Activated CD4-positive, alpha-beta T cell treated with anti-CD3 and anti-CD28 coated beads for 36 hours (primary cell): ENCODE measurements at regions of chr20 and their contacts with region 1.

Region 1: GRCh38 chr20:25525295-25526266 is 59.8 kb downstream of the NINL start:
- DNase-seq: no peak
- ATAC-seq: no peak
- H3K4me3 Mint-ChIP-seq: no peak overlapping the region
- H3K27ac Mint-ChIP-seq: no peak overlapping the region
- H3K4me1 Mint-ChIP-seq: no peaks in the 10 kb centered on the region
- H3K27me3 Mint-ChIP-seq: no peaks in the 10 kb centered on the region

Region 2: DNA sequence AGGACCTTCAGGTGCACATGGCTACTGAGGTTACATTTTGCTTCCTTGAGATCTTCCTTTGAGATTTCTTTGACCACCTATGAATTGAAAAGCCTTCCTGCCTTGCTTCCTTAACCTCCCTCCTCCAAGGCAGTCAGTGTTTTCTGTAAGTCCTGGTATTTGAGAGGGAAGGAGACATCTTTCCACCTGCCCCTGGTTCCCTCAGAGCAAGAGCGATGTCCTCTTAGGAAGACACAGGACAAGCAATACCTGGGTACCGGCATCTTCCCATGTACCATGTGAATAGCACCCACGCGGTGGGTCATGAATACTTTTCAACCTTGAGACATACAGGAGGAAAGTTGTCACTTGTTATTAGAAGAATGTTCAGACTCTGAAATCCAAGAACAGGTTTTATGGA is 81.0 kb before region 1 on chr20:
- CTCF ChIA-PET with region 1: no interaction called
- POLR2A ChIA-PET with region 1: no interaction called
- intact Hi-C with region 1: loop called in 1 of 2 experiments (anchors 10 kb)
- DNase-seq: no peak
- ATAC-seq: no peak
- H3K4me3 Mint-ChIP-seq: no peak overlapping the region
- H3K27ac Mint-ChIP-seq: no peak overlapping the region
- H3K4me1 Mint-ChIP-seq: no peaks in the 10 kb centered on the region
- H3K27me3 Mint-ChIP-seq: no peaks in the 10 kb centered on the region

Region 3: GRCh38 chr20:25470045-25470444 is 55.5 kb before region 1 on chr20:
- CTCF ChIA-PET with region 1: no interaction called
- POLR2A ChIA-PET with region 1: no interaction called
- intact Hi-C with region 1: loop called in 1 of 2 experiments (anchors 5 kb)
- DNase-seq: peak; percentile 73
- ATAC-seq: peak; percentile 85
- H3K4me3 Mint-ChIP-seq: no peak overlapping the region
- H3K27ac Mint-ChIP-seq: no peak overlapping the region
- H3K4me1 Mint-ChIP-seq: peaks cover 4% of the 10 kb centered on the region
- H3K27me3 Mint-ChIP-seq: no peaks in the 10 kb centered on the region